ENCODE measurements at regions of chr1 and their contacts with region 1.

Region 1: GRCh38 chr1:178031856-178032320 is 62.0 kb upstream of the RASAL2 start:
- DNase-seq: peak; percentile 85
- CTCF ChIP-seq: peak; percentile 80

Region 2: GRCh38 chr1:178189814-178190213 is 157.9 kb after region 1 on chr1:
- in situ Hi-C with region 1: loop called (anchors 25 kb)
- DNase-seq: peak; percentile 32
- CTCF ChIP-seq: peak; percentile 76

Measured in GM13977 (cell line).